Left ventricle myocardium superior (tissue), 1 donor: ENCODE measurements at regions of chr14 and their contacts with region 1.

Region 1: GRCh38 chr14:82441270-82441669 is 907.6 kb upstream of the SEL1L start:
- DNase-seq: no peak
- ATAC-seq: no peak

Region 2: DNA sequence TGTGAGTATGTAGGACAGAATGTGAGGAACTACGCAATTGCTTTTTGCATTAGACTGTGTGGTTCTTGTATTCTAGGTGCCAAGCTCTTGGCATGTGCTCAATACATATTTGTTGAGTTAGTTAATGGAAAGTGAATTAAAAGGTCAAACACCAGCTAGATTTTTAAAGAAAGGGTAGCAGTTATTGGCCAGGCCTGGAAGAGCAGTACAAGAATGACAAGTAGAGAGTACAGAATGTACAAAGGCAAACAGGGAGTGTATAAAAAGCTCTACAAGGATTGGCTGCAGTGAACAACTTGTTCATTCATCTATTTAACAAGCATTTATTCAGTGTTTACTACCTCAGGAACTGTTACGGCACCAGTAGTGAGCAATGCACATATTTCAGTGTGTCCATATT is 53.6 kb before region 1 on chr14:
- intact Hi-C with region 1: loop called (anchors 5 kb)
- DNase-seq: no peak
- ATAC-seq: peak; percentile 52

Region 3: DNA sequence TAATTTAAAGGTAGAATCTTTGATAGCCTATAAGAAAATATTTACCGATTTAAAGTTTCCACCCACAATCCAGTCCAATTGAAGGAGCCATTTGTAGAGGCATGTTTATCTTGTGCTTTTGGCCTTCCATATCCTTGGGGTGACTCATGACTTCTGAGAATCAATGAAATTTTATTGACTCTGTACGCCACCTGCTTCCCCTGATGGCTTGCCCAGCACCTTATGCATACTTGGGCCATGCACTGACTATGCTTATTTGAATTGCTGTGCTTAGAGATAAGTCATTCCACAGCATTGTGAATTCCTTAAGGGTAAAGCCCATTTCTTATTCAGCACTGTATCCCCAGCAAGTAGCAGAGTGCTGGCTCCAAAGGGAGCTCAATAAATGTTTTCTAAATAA is 47.2 kb after region 1 on chr14:
- intact Hi-C with region 1: no loop called
- DNase-seq: no peak
- ATAC-seq: no peak

Region 4: GRCh38 chr14:83217492-83217891 is 776.2 kb after region 1 on chr14:
- intact Hi-C with region 1: no loop called
- DNase-seq: no peak
- ATAC-seq: no peak